Spleen (tissue), 13 donors: ENCODE measurements at regions of chr1 and their contacts with region 1.

Region 1: GRCh38 chr1:203006948-203007871 is at the start of gene TMEM183A:
- DNase-seq: peak; percentile 96
- H3K4me3 ChIP-seq: peak within 1 kb of the TSS; percentile 75 to 95 (median 86)
- H3K27ac ChIP-seq: peak within 1 kb of the TSS; percentile 84 to 95 (median 94)
- H3K4me1 ChIP-seq: peaks cover 14 to 50% (median 39%) of the 10 kb centered on the region in 6 donors
- H3K27me3 ChIP-seq: no peaks in the 10 kb centered on the region
- CTCF ChIP-seq: peak in 3 of 11 experiments; percentile 15 to 36 (median 20)
- POLR2A ChIP-seq: peak; percentile 65 to 78 (median 78)
- total RNA-seq, gene TMEM183A: 47.6 to 61.9 (median 55.8) TPM

Region 2: GRCh38 chr1:202807926-202808757 is 199.1 kb before region 1 on chr1 and contains the start of gene KDM5B:
- intact Hi-C with region 1: loop called (anchors 10 kb)
- DNase-seq: peak; percentile 92
- H3K4me3 ChIP-seq: peak within 1 kb of the TSS; percentile 70 to 99 (median 95)
- H3K27ac ChIP-seq: peak within 1 kb of the TSS; percentile 73 to 93 (median 90)
- H3K4me1 ChIP-seq: peaks cover 5 to 72% (median 53%) of the 10 kb centered on the region in 6 donors
- H3K27me3 ChIP-seq: peaks cover 0 to 3% (median 0%) of the 10 kb centered on the region in 7 donors
- CTCF ChIP-seq: peak in 1 of 11 experiments; percentile 11
- POLR2A ChIP-seq: peak in 1 of 3 donors; percentile 73
- total RNA-seq, gene KDM5B: 45.4 to 71.9 (median 59.4) TPM